A673 (cell line): ENCODE measurements at regions of chrX and their contacts with region 1.

Region 1: GRCh38 chrX:48521353-48522243 is at the start of gene EBP:
- DNase-seq: peak; percentile 94
- H3K4me3 ChIP-seq: peak within 1 kb of the TSS; percentile 60
- H3K27ac ChIP-seq: peak within 1 kb of the TSS; percentile 80
- H3K4me1 ChIP-seq: no peaks in the 10 kb centered on the region
- H3K27me3 ChIP-seq: no peaks in the 10 kb centered on the region
- CTCF ChIP-seq: no peak
- total RNA-seq, gene EBP: 152 and 155 TPM in 2 replicates

Region 2: DNA sequence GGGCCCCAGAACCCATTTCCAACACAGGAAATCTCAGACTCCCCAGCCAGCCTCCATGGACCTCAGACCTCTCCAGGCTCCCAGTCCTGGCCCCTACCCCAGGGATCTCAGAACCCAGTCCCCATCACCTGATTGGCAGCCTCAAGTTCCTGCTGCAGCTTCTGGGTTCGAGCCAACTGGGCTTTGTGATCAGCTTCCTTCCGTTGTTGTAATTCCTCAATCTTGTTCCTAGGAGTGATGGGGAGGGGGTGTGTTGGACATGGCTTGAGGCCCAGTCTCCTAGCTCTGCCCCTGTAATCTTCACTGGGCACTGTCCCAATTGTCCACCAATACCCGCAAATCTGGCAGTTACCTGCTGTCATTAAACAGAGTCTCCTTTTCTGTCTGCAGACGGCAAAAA is 467.9 kb after region 1 on chrX:
- CTCF ChIA-PET with region 1: no interaction called
- POLR2A ChIA-PET with region 1: interaction called, 11 read pairs
- intact Hi-C with region 1: no loop called
- DNase-seq: no peak
- H3K4me3 ChIP-seq: no peak overlapping the region
- H3K27ac ChIP-seq: no peak overlapping the region
- H3K4me1 ChIP-seq: no peaks in the 10 kb centered on the region
- H3K27me3 ChIP-seq: no peaks in the 10 kb centered on the region
- CTCF ChIP-seq: no peak